SK-N-SH (cell line): ENCODE measurements at regions of chr3 and their contacts with region 1.

Region 1: GRCh38 chr3:19364148-19364547 is 215.8 kb downstream of the KCNH8 start:
- DNase-seq: no peak
- H3K4me3 ChIP-seq: no peak overlapping the region
- H3K27ac ChIP-seq: no peak overlapping the region
- H3K4me1 ChIP-seq: no peaks in the 10 kb centered on the region
- H3K27me3 ChIP-seq: no peaks in the 10 kb centered on the region
- CTCF ChIP-seq: no peak
- EP300 ChIP-seq: no peak
- RAD21 ChIP-seq: no peak

Region 2: DNA sequence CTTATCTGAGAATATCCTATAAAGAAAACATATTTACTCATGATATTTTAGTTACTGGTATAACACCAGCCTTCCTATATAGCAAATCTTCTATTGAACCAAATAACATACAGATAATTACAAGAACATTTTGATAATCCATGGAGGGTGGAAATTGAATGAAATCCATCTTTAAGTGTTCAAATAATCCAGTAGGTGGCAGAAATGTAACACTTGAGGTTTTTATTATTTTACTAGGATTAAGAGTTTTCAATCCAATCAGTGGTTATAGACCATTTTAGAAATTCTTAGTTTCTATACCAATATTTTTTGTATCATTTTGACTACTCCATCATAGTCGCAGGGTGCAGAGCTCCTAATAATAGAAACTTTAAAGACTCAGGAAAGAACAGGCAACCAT is 317.7 kb before region 1 on chr3:
- CTCF ChIA-PET with region 1: no interaction called
- POLR2A ChIA-PET with region 1: no interaction called
- DNase-seq: peak; percentile 10
- H3K4me3 ChIP-seq: no peak overlapping the region
- H3K27ac ChIP-seq: no peak overlapping the region
- H3K4me1 ChIP-seq: no peaks in the 10 kb centered on the region
- H3K27me3 ChIP-seq: no peaks in the 10 kb centered on the region
- CTCF ChIP-seq: peak; percentile 52
- EP300 ChIP-seq: no peak
- RAD21 ChIP-seq: peak; percentile 58

Region 3: GRCh38 chr3:19295208-19295607 is 68.9 kb before region 1 on chr3:
- CTCF ChIA-PET with region 1: no interaction called
- POLR2A ChIA-PET with region 1: no interaction called
- DNase-seq: no peak
- H3K4me3 ChIP-seq: no peak overlapping the region
- H3K27ac ChIP-seq: no peak overlapping the region
- H3K4me1 ChIP-seq: no peaks in the 10 kb centered on the region
- H3K27me3 ChIP-seq: no peaks in the 10 kb centered on the region
- CTCF ChIP-seq: no peak
- EP300 ChIP-seq: no peak
- RAD21 ChIP-seq: no peak

Region 4: DNA sequence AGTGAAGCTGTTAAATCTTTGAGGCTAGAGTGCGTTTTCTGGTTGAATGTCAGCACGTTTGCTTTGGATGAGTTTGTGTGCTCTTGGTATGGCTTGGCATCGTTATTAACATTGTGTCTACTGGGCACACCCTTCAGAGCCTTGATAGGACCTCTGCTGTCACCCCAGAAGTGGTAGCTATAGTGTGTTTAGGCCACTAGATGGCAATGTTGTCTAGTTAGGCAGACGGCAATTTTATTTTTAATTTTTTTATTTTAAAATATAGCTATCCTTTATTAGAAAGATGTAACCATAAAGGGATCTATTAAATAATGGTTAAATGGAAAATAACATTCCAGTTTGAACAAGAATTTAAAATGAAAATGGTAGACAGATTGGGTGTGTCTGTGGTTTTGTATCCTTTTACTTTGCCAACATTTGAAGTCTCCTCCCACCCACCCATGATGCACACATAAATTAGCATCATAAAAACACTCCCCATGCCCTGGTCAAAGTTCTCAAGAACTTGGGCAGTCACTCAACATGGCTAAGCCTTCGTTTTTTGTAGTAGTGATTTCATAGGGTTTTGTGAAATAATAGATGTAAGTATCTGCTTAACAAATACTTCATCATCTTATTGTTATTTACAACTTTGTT is 15.1 kb before region 1 on chr3:
- CTCF ChIA-PET with region 1: interaction called, 14 read pairs
- POLR2A ChIA-PET with region 1: no interaction called
- DNase-seq: peak; percentile 20
- H3K4me3 ChIP-seq: no peak overlapping the region; a peak in 1 of 4 replicates
- H3K27ac ChIP-seq: no peak overlapping the region
- H3K4me1 ChIP-seq: no peaks in the 10 kb centered on the region; a peak in 2 of 4 replicates
- H3K27me3 ChIP-seq: no peaks in the 10 kb centered on the region
- CTCF ChIP-seq: peak; percentile 67
- EP300 ChIP-seq: no peak
- RAD21 ChIP-seq: peak; percentile 72